Body of pancreas (tissue), 4 donors: ENCODE measurements at regions of chr5 and their contacts with region 1.

Region 1: GRCh38 chr5:154395407-154396258 is 50.2 kb upstream of the SAP30L start:
- DNase-seq: peak in 2 of 4 donors; percentile 30 to 35
- ATAC-seq: no peak
- H3K4me3 ChIP-seq: no peak overlapping the region
- H3K27ac ChIP-seq: no peak overlapping the region
- H3K4me1 ChIP-seq: peaks cover 7% of the 10 kb centered on the region
- H3K27me3 ChIP-seq: no peaks in the 10 kb centered on the region
- CTCF ChIP-seq: no peak
- POLR2A ChIP-seq: no peak

Region 2: DNA sequence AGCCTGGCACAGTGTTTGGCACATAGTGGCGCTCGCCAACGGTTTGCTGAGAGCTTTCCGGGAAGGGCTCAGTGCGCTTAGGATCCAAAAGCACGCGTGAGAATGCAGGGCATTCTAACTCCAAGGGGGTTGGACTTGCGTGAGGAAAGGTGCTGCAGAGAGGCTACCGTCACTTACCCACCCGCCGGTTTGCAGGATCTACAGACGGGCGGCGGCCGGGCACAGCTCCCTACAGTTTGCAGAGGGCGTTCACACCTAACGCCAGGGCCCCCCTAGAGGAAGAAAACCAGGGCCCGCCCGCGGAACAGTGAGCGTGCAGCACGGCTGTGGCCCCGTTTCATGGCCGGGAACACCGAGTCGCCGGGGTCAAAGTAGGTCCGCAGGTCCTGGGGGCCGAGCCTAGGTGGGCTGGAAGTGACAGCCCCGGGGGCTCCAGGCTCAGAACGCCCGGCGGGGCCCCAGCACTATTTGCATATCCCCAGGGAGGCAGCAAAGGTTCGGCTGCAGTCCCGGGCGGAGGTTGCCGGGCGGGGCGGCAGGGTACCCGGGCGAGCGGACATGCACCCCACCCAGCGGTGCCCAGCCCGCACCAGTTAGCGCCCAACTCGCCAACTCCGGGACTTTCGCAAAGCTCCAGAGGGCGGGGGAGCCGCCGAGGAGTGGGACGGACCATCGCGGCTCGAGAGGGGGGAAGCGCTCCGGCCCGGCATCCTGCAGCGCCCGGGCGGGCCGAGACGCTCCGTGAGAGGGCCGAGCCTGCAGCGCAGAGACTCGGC is 205.6 kb before region 1 on chr5:
- intact Hi-C with region 1: loop called (anchors 10 kb)
- DNase-seq: peak; percentile 88 to 89 (median 89)
- ATAC-seq: peak; percentile 96
- H3K4me3 ChIP-seq: peak overlapping the region; percentile 79 to 84
- H3K27ac ChIP-seq: peak overlapping the region; percentile 67 to 78 (median 76)
- H3K4me1 ChIP-seq: peaks cover 29% of the 10 kb centered on the region
- H3K27me3 ChIP-seq: no peaks in the 10 kb centered on the region
- CTCF ChIP-seq: peak in 4 of 7 experiments; percentile 13 to 43 (median 30)
- POLR2A ChIP-seq: peak; percentile 25 to 62 (median 59)

Region 3: DNA sequence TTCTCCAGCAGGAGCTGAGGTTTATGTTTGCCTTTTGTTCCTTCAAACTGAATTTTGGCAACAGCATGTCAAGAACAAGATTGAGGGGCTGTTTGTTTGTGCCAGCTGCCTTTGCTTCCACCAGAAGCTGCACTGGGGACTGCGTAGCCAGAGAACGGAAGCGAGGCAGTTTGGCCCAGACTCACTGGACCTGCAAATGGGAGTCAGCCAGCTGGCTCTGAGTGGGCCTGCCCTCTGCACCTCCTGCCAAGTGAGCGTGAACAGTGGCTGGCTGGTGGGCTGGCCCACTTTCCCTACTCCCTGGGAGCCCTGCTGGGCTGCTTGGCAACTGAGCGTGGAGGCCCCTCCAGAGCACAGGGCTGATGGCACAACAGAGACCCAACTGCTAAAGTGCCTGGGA is 93.5 kb before region 1 on chr5:
- intact Hi-C with region 1: no loop called
- DNase-seq: peak; percentile 78 to 93 (median 91)
- ATAC-seq: peak; percentile 98
- H3K4me3 ChIP-seq: no peak overlapping the region
- H3K27ac ChIP-seq: peak overlapping the region; percentile 34 to 80 (median 54)
- H3K4me1 ChIP-seq: peaks cover 26% of the 10 kb centered on the region
- H3K27me3 ChIP-seq: no peaks in the 10 kb centered on the region
- CTCF ChIP-seq: peak in 1 of 7 experiments; percentile 6
- POLR2A ChIP-seq: no peak